Gastrocnemius medialis (tissue), 4 donors: ENCODE measurements at regions of chr1 and their contacts with region 1.

Region 1: DNA sequence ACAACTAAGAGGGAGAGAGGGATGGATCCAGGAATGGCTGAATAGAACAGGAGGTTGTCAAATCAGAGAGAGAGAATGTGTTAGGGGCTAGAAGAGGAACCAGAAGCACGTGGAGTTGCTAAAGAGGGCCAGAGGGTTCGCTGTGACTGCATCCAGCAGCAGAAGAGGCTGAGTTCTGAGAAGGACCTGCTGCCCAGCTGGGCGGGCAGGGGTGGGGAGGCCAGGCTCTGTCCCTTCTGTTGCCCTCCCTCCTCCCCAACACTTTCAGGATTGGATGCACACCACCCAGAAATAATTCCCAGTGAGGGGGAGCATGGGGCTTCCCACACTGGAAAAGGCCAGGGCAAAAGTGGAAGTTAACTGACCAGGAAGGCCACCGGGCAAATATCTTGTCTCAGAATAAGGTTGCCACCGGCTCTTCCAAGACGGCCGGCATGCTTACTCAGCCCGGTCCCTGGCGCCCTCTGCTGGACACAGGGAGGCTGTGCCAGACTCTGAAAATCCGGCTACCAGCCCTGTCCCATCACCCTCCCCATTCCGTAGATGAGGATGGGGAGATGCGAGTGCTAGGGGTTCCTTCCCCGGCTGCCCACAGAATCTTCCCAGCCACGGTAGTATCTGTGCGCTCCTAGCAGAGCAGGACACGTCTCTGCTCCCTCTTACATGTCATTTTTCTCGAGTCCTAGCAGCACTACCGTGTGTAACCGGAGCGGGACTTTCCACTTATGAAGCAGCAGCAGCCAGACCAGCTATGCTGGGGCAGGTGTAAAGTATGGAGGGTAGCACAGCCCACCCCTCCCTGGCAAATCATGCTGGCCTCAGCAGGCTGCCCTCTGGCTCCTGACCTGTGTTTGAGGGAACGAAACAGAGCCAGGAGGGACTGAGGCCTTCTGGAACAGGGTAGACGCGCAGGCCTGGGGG is 46.8 kb upstream of the A3GALT2 start:
- DNase-seq: peak; percentile 81 to 85
- ATAC-seq: peak; percentile 55 to 65
- H3K4me3 ChIP-seq: no peak overlapping the region
- H3K27ac ChIP-seq: peak overlapping the region; percentile 86 to 98 (median 96)
- H3K4me1 ChIP-seq: peaks cover 45 to 50% of the 10 kb centered on the region in 2 donors
- H3K27me3 ChIP-seq: no peaks in the 10 kb centered on the region
- CTCF ChIP-seq: peak; percentile 97 to 99 (median 99)
- POLR2A ChIP-seq: peak in 1 of 2 donors; percentile 24

Region 2: DNA sequence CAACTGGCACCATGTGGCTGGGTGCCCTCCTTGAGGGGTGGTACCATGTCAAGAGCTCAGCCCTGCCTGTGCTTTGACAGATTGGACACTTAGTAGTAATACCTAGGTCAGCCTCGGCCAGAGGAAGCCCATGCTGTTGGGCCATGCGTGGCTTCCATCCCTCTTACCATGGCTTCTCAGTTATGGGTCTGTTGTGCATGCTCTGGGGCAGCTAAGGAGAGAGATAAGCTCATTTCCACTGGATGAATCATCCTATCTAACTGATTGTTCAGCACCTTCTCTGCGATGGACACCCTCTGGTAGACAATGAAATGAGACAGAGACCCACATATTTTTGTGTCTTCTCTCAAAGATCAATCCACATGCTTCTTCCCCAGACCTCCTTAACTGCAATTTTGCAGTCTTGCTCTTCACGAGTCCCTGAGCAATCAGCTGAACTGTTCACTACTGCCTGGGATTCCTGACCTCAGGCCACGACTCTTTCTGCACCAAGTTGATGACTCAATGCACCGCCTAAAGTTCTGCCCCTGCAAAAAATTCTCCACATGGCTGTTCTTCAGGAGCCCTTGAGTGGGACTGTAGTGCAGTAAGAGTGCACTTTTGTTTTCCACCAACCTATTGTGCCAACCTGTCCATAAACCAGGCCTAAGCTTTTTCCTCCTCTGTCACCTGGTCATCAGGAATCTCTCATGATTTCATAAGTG is 179.0 kb before region 1 on chr1:
- in situ Hi-C with region 1: no loop called
- intact Hi-C with region 1: no loop called
- DNase-seq: no peak
- ATAC-seq: no peak
- H3K4me3 ChIP-seq: no peak overlapping the region
- H3K27ac ChIP-seq: no peak overlapping the region
- H3K4me1 ChIP-seq: no peaks in the 10 kb centered on the region
- H3K27me3 ChIP-seq: peaks cover 0 to 3% (median 0%) of the 10 kb centered on the region in 3 donors
- CTCF ChIP-seq: no peak
- POLR2A ChIP-seq: no peak

Region 3: GRCh38 chr1:33219881-33220661 is 147.7 kb before region 1 on chr1:
- in situ Hi-C with region 1: no loop called
- intact Hi-C with region 1: loop called (anchors 2 kb)
- DNase-seq: no peak
- ATAC-seq: no peak
- H3K4me3 ChIP-seq: no peak overlapping the region
- H3K27ac ChIP-seq: no peak overlapping the region
- H3K4me1 ChIP-seq: no peaks in the 10 kb centered on the region
- H3K27me3 ChIP-seq: no peaks in the 10 kb centered on the region
- CTCF ChIP-seq: no peak
- POLR2A ChIP-seq: no peak

Region 4: GRCh38 chr1:33327587-33328315 is 40.0 kb before region 1 on chr1:
- in situ Hi-C with region 1: no loop called
- intact Hi-C with region 1: loop called (anchors 2 kb)
- DNase-seq: peak; percentile 84 to 91
- ATAC-seq: peak; percentile 78 to 85
- H3K4me3 ChIP-seq: no peak overlapping the region
- H3K27ac ChIP-seq: peak overlapping the region; percentile 94 to 99 (median 98)
- H3K4me1 ChIP-seq: peaks cover 43 to 45% of the 10 kb centered on the region in 2 donors
- H3K27me3 ChIP-seq: no peaks in the 10 kb centered on the region
- CTCF ChIP-seq: no peak
- POLR2A ChIP-seq: no peak

Region 5: DNA sequence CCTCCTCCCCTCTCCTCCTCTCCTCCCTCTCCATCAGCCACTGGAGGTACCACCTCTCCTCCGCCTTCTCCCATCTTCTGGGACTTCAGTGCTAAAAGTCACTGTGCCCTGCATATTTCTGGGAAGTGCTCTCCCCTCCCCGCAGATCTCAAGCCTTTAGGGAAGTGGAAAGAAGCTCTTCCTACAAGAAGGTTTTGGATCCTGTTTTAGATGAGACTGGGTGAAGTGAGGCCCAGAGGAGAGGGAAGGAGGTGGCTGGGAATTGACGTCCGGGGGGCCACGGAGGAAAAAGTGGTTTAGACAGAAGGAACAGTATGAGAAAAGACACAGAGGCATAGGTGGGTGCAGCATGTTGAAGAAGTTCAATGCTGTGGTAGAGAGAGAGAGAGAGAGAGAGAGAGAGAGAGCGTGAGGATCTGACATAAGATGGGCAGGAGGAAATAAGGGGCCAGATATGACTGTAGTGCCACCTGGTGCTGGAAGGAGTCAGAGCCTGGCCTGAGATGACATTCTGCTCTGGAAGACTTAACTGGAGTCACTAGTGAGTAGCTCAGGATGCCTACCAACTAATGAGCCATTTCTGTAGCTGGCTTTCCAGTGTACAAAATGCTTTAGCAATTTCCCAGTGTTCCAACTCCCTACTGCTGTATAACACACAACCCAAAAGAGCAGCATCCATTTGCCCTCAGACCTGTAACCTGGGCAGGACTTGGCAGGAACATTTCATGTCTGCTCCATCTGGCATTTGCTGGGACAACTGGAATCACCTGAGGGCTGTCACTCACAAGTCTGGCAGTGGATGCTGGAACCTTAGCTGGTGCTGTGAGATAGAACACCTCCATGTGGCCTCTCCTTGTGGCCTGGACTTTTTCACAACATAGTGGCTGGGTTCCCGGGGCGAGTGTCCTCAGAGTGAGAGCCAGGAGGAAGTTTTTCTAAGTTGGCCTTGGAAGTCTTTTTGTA is 88.1 kb after region 1 on chr1:
- in situ Hi-C with region 1: loop called in 2 of 4 experiments (anchors 25 kb)
- intact Hi-C with region 1: loop called (anchors 2 kb)
- DNase-seq: peak; percentile 90 to 96
- ATAC-seq: peak; percentile 86 to 90
- H3K4me3 ChIP-seq: no peak overlapping the region
- H3K27ac ChIP-seq: peak overlapping the region; percentile 78 to 84 (median 80)
- H3K4me1 ChIP-seq: peaks cover 32 to 43% of the 10 kb centered on the region in 2 donors
- H3K27me3 ChIP-seq: no peaks in the 10 kb centered on the region
- CTCF ChIP-seq: peak; percentile 54 to 73 (median 68)
- POLR2A ChIP-seq: no peak